ENCODE measurements at regions of chr11 and their contacts with region 1.

Region 1: GRCh38 chr11:121417055-121417551 is 35.0 kb upstream of the SORL1 start:
- DNase-seq: peak; percentile 81
- H3K4me3 Mint-ChIP-seq: no peak overlapping the region
- H3K27ac Mint-ChIP-seq: peak overlapping the region; percentile 85
- H3K4me1 Mint-ChIP-seq: peaks cover 66% of the 10 kb centered on the region
- H3K27me3 Mint-ChIP-seq: no peaks in the 10 kb centered on the region

Region 2: DNA sequence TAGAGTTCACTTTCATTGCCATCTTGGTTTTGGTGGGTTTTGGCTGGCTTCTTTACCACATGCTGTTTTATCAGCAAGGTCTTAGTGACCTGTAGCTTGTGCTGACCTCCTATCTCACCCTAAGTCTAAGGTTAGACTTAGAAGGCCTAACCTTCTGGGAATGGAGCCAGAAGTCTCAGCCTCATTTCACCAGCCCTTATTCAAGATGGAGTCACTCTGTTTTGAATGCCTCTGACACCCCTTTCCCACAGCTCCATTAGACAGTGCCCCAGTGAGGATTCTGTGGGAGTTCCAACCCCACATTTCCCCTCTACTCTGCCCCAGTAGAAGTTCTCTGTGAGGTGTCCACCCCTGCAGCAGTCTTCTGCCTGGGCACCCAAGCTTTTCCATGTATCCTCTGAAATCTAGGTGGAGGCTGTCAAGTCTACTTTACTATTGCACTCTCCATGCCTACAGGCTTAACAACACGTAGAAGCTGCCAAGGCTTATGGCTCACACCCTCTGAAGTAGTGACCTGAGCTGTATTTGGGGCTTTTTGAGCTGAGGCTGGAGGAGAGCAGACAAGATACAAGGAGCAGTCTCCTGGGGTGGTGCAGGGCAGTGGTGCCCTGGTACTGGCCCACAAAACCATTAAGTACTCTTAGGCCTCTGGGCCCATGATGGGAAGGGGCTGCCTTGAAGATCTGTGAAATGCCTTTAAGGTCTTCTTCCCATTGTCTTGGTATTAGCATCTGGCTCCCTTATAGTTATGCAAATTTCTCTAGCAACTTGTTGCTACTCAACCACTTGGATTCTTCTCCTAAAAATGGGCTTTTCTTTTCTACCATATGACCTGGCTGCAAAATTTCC is 190.5 kb before region 1 on chr11:
- CTCF ChIA-PET with region 1: no interaction called
- POLR2A ChIA-PET with region 1: no interaction called
- intact Hi-C with region 1: no loop called
- DNase-seq: no peak
- H3K4me3 Mint-ChIP-seq: no peak overlapping the region
- H3K27ac Mint-ChIP-seq: no peak overlapping the region
- H3K4me1 Mint-ChIP-seq: no peaks in the 10 kb centered on the region
- H3K27me3 Mint-ChIP-seq: peaks cover 18% of the 10 kb centered on the region

Region 3: GRCh38 chr11:121367001-121367843 is 49.9 kb before region 1 on chr11:
- CTCF ChIA-PET with region 1: no interaction called
- POLR2A ChIA-PET with region 1: no interaction called
- intact Hi-C with region 1: loop called (anchors 5 kb)
- DNase-seq: peak; percentile 49
- H3K4me3 Mint-ChIP-seq: peak overlapping the region; percentile 30
- H3K27ac Mint-ChIP-seq: peak overlapping the region; percentile 59
- H3K4me1 Mint-ChIP-seq: peaks cover 32% of the 10 kb centered on the region
- H3K27me3 Mint-ChIP-seq: no peaks in the 10 kb centered on the region

Region 4: GRCh38 chr11:121497176-121497998 is 80.3 kb after region 1 on chr11:
- CTCF ChIA-PET with region 1: no interaction called
- POLR2A ChIA-PET with region 1: no interaction called
- intact Hi-C with region 1: no loop called
- DNase-seq: no peak
- H3K4me3 Mint-ChIP-seq: no peak overlapping the region
- H3K27ac Mint-ChIP-seq: no peak overlapping the region
- H3K4me1 Mint-ChIP-seq: peaks cover 56% of the 10 kb centered on the region
- H3K27me3 Mint-ChIP-seq: no peaks in the 10 kb centered on the region

Region 5: GRCh38 chr11:121643535-121644512 is 226.7 kb after region 1 on chr11:
- CTCF ChIA-PET with region 1: no interaction called
- POLR2A ChIA-PET with region 1: no interaction called
- intact Hi-C with region 1: no loop called
- DNase-seq: no peak
- H3K4me3 Mint-ChIP-seq: no peak overlapping the region
- H3K27ac Mint-ChIP-seq: no peak overlapping the region
- H3K4me1 Mint-ChIP-seq: peaks cover 2% of the 10 kb centered on the region
- H3K27me3 Mint-ChIP-seq: no peaks in the 10 kb centered on the region